MCF 10A (cell line): ENCODE measurements at regions of chr2 and their contacts with region 1.

Region 1: GRCh38 chr2:98805412-98806171 is 74.7 kb upstream of the MGAT4A start:
- DNase-seq: peak; percentile 97
- H3K4me3 Mint-ChIP-seq: peak overlapping the region; percentile 40
- H3K27ac Mint-ChIP-seq: peak overlapping the region; percentile 22
- H3K4me1 Mint-ChIP-seq: peaks cover 40% of the 10 kb centered on the region
- H3K27me3 Mint-ChIP-seq: no peaks in the 10 kb centered on the region
- CTCF ChIP-seq: no peak

Region 2: DNA sequence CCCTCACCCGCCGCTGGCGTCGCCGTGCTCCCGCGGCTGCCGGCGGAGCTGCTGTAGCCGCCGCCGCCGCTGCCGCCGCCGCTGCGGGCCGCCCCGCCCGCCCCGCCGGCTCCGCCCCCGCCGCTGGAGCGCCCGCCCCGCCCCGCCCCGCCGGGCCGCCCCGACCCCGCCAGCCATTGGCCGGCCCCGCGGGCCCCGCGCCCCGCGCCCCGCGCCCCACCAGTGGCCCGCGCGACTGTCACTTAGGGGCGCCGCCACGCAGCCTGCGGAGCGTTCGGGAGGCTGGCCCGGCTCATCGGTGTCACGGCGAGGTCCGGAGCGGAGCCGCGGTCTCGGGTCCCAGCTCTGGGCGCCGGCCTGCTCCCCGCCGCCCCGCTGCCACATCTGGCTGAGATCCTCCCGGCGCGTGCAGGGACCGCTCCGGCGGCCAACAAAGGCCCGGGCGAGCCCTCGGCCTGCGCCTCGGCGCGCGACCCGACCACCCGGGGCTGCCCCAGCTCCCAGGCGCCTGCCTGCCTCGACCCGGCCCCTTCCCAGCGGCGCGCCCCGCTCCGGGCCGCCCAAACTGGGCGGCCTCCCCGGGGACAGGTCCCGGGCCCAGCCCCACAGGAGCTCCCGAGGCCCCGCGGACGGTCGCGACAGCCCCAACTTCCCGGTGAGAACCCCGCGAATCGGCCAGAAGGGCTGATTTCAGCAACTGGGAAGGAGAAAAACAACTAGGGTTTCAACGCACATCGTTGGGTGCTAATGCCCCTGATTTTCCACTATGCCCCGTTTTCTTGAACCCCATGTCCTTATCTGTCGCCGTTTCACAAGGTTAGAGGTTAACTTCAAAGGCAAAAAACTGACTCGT is 74.3 kb before region 1 on chr2 and contains the start of gene MGAT4A:
- CTCF ChIA-PET with region 1: interaction called, 4 read pairs
- POLR2A ChIA-PET with region 1: interaction called, 15 read pairs
- intact Hi-C with region 1: loop called (anchors 1 kb)
- DNase-seq: peak; percentile 35
- H3K4me3 Mint-ChIP-seq: peak within 1 kb of the TSS; percentile 67
- H3K27ac Mint-ChIP-seq: no peak within 1 kb of the TSS
- H3K4me1 Mint-ChIP-seq: peaks cover 10% of the 10 kb centered on the region
- H3K27me3 Mint-ChIP-seq: no peaks in the 10 kb centered on the region
- CTCF ChIP-seq: no peak
- total RNA-seq, gene MGAT4A: 3.7 and 4.6 TPM in 2 replicates

Region 3: GRCh38 chr2:99088017-99088416 is 282.4 kb after region 1 on chr2:
- CTCF ChIA-PET with region 1: no interaction called
- POLR2A ChIA-PET with region 1: no interaction called
- intact Hi-C with region 1: no loop called
- DNase-seq: no peak
- H3K4me3 Mint-ChIP-seq: no peak overlapping the region
- H3K27ac Mint-ChIP-seq: no peak overlapping the region
- H3K4me1 Mint-ChIP-seq: no peaks in the 10 kb centered on the region
- H3K27me3 Mint-ChIP-seq: no peaks in the 10 kb centered on the region
- CTCF ChIP-seq: no peak

Region 4: DNA sequence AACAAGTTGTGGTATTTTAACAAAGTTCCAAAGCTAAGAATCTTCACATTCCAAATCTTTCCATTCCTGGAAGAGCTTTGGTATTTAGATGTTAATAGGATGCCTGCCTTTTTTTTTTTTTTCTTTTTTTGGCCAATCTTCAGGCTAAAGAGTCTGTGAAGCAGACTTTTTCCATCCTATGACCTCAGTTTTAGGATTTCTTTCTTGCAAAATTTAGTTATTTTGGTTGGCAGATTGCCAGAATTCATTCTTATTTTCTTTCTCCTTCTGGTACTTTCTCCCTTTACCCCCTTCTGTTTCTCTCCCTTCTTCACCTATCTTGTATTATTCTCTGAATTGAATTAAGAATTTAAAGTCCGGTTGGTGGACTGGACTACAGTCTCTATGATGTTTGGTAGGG is 902.0 kb after region 1 on chr2:
- CTCF ChIA-PET with region 1: no interaction called
- POLR2A ChIA-PET with region 1: no interaction called
- intact Hi-C with region 1: no loop called
- DNase-seq: peak; percentile 20
- H3K4me3 Mint-ChIP-seq: no peak overlapping the region
- H3K27ac Mint-ChIP-seq: no peak overlapping the region
- H3K4me1 Mint-ChIP-seq: peaks cover 15% of the 10 kb centered on the region
- H3K27me3 Mint-ChIP-seq: no peaks in the 10 kb centered on the region
- CTCF ChIP-seq: no peak